Esophagus muscularis mucosa (tissue), 4 donors: ENCODE measurements at regions of chr6 and their contacts with region 1.

Region 1: DNA sequence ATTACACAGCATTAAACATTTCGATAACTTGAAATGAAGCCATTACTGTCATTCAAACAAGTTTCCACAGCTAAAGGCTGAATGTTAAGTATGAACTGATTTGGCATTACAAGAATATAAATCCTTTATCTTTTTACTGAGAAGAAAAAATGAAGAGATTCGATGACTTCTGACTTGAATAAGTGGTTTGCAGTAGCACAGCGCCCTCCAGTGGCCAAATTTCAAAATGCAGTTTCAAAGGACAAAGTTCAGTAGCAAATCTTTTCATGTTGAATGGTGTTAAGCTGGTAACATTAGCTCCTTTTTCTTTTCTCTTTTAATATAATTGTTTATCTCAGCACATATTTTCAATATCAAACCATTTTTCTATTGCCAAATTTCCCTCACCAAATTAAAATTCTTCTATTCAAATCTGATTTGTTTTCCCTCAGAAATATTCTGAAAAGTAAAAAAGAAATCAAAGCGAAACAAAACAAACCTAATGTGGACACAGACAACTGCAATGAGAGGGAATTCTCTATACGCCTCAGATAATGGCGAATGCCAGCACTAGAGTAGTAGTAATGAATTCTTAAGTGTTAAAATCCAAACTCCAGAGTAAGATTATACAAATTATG is 145.7 kb downstream of the BTBD9 start:
- DNase-seq: peak; percentile 96
- H3K4me3 ChIP-seq: no peak overlapping the region
- H3K27ac ChIP-seq: no peak overlapping the region
- H3K4me1 ChIP-seq: peaks cover 0 to 12% (median 9%) of the 10 kb centered on the region in 4 donors
- H3K27me3 ChIP-seq: no peaks in the 10 kb centered on the region
- CTCF ChIP-seq: peak; percentile 86 to 94 (median 90)
- EP300 ChIP-seq: no peak
- POLR2A ChIP-seq: no peak

Region 2: DNA sequence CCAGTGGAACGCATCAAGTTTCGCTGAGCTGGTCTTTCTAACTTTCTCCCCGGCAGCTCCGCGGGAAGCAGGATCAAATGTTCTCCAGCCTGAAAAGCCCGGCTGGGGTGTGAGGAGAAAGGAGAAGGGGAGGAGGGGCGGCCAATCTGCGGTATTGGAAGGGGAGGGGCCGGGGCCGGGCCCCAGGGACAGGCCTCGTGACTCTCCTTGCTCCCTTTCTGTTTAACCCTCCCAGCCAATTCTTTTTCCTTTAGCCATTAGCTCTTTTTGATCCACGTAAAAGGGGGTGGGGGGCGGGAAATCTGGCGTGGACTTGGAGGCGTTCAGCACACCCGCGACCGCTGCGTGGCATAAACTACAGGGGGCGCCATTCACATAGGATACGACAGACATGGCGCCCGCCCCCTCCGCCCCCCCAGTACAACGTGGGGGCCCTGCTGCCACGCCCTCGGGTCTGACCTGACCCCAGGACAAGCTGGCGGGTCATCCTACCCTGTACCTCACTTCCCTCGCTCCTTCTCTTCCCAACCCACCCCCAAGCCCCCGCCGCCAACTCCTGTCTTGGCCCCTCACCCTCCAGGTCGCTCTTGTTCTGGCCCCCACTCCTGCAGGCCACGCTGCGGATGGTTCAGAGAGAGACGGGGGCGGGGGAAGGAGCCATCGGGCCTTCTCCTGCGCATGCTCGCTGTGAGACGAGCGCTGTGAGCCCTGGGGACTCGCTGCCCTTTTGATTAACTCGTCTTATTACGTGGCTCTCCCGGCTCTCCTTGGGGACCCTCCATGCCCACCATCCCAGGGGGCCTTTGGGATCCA is 788.6 kb before region 1 on chr6:
- intact Hi-C with region 1: loop called (anchors 5 kb)
- DNase-seq: peak; percentile 95
- H3K4me3 ChIP-seq: peak overlapping the region; percentile 55 to 69 (median 59)
- H3K27ac ChIP-seq: peak overlapping the region; percentile 58 to 81 (median 80)
- H3K4me1 ChIP-seq: peaks cover 9 to 19% (median 13%) of the 10 kb centered on the region in 4 donors
- H3K27me3 ChIP-seq: no peaks in the 10 kb centered on the region
- CTCF ChIP-seq: peak; percentile 71 to 74 (median 74)
- EP300 ChIP-seq: no peak
- POLR2A ChIP-seq: no peak

Region 3: GRCh38 chr6:37791156-37791919 is 702.7 kb before region 1 on chr6:
- intact Hi-C with region 1: loop called (anchors 5 kb)
- DNase-seq: peak; percentile 94
- H3K4me3 ChIP-seq: no peak overlapping the region
- H3K27ac ChIP-seq: no peak overlapping the region
- H3K4me1 ChIP-seq: peaks cover 4 to 14% (median 13%) of the 10 kb centered on the region in 4 donors
- H3K27me3 ChIP-seq: no peaks in the 10 kb centered on the region
- CTCF ChIP-seq: peak; percentile 92 to 98 (median 94)
- EP300 ChIP-seq: no peak
- POLR2A ChIP-seq: no peak

Region 4: DNA sequence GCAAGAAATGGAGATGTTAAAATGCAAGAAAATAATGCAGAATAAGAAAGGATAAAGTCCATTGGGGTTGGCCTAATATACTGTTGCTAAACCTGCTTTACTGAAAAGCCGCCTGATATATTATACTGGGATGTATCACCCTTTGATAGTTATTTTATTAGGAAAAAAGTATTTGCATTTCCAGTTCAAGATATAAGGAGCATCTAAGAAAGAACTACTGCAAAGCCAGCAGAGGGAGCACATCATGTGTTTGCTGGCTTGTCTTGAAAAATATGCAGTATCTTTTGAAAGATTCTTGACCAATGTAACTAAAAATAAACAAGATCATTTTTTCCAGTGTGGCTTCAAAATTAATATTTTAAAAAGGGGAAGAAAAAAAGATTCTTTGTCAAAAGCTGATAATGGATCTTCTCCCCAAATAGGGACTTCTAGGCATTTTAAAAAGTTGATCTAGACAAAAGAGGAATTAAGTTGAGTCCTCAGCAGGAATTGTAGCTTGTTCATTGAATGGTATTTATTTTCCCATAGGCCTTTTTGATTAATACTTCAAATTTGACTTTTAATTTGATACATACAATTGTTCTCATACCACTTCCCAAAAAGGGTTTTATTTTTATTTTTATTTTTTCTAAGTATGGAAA is 459.6 kb before region 1 on chr6:
- intact Hi-C with region 1: loop called (anchors 10 kb)
- DNase-seq: no peak
- H3K4me3 ChIP-seq: no peak overlapping the region
- H3K27ac ChIP-seq: no peak overlapping the region
- H3K4me1 ChIP-seq: peaks cover 23 to 56% (median 44%) of the 10 kb centered on the region in 4 donors
- H3K27me3 ChIP-seq: no peaks in the 10 kb centered on the region
- CTCF ChIP-seq: peak; percentile 33 to 48 (median 38)
- EP300 ChIP-seq: no peak
- POLR2A ChIP-seq: no peak